Activated T-helper 2 cell treated with anti-CD3 and anti-CD28 coated beads, Interferon-gamma antibody, Interleukin-2, Interleukin-4, amounts not matched to agents 10 μg/mL and 5 μg/mL and 100 μg/mL, durations not matched to agents 14 hours and 24 hours and 36 hours (primary cell): ENCODE measurements at regions of chr7 and their contacts with region 1.

Region 1: GRCh38 chr7:96414931-96415292 is 93.0 kb upstream of the SLC25A13 start:
- DNase-seq: peak; percentile 35
- H3K4me3 Mint-ChIP-seq: no peak overlapping the region
- H3K27ac Mint-ChIP-seq: no peak overlapping the region
- H3K4me1 Mint-ChIP-seq: peaks cover 2% of the 10 kb centered on the region
- H3K27me3 Mint-ChIP-seq: peaks cover 18% of the 10 kb centered on the region

Region 2: DNA sequence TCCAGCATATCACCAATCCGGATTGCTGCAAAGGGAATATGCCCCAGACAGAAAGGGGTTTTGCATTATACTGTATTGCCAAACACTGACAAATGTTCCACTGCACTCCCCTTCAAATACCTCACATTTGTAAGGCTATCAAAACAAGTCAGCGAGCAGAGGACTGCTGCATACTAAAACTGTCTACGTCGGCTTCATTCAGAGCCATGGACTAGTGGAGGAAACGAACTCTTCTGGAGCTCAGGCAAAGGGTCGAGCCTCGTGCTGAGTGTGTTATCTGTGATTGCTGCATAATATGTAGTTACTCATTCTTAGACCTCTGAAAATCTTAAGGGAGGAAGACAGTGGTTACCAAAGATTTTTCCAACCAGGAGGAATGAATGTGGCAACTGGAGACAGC is 442.4 kb before region 1 on chr7:
- intact Hi-C with region 1: no loop called
- DNase-seq: no peak
- H3K4me3 Mint-ChIP-seq: no peak overlapping the region
- H3K27ac Mint-ChIP-seq: no peak overlapping the region
- H3K4me1 Mint-ChIP-seq: no peaks in the 10 kb centered on the region
- H3K27me3 Mint-ChIP-seq: no peaks in the 10 kb centered on the region

Region 3: GRCh38 chr7:96075510-96076349 is 339.2 kb before region 1 on chr7:
- intact Hi-C with region 1: loop called (anchors 10 kb)
- DNase-seq: peak; percentile 20
- H3K4me3 Mint-ChIP-seq: peak overlapping the region; percentile 77
- H3K27ac Mint-ChIP-seq: no peak overlapping the region
- H3K4me1 Mint-ChIP-seq: peaks cover 4% of the 10 kb centered on the region
- H3K27me3 Mint-ChIP-seq: peaks cover 46% of the 10 kb centered on the region

Region 4: GRCh38 chr7:96397936-96398598 is 16.8 kb before region 1 on chr7:
- intact Hi-C with region 1: no loop called
- DNase-seq: no peak
- H3K4me3 Mint-ChIP-seq: no peak overlapping the region
- H3K27ac Mint-ChIP-seq: no peak overlapping the region
- H3K4me1 Mint-ChIP-seq: no peaks in the 10 kb centered on the region
- H3K27me3 Mint-ChIP-seq: peaks cover 23% of the 10 kb centered on the region

Region 5: GRCh38 chr7:96709381-96710228 is 294.7 kb after region 1 on chr7 and contains the start of gene SEM1:
- intact Hi-C with region 1: loop called (anchors 10 kb)
- DNase-seq: peak; percentile 57
- H3K4me3 Mint-ChIP-seq: peak within 1 kb of the TSS; percentile 98
- H3K27ac Mint-ChIP-seq: peak within 1 kb of the TSS; percentile 95
- H3K4me1 Mint-ChIP-seq: peaks cover 15% of the 10 kb centered on the region
- H3K27me3 Mint-ChIP-seq: no peaks in the 10 kb centered on the region
- total RNA-seq, gene SEM1: 39.0 and 51.9 TPM in 2 replicates

Region 6: GRCh38 chr7:96973986-96974385 is 559.1 kb after region 1 on chr7:
- intact Hi-C with region 1: no loop called
- DNase-seq: no peak
- H3K4me3 Mint-ChIP-seq: no peak overlapping the region
- H3K27ac Mint-ChIP-seq: no peak overlapping the region
- H3K4me1 Mint-ChIP-seq: no peaks in the 10 kb centered on the region
- H3K27me3 Mint-ChIP-seq: peaks cover 14% of the 10 kb centered on the region